Sciatic nerve (tissue), 2 donors: ENCODE measurements at regions of chr3 and their contacts with region 1.

Region 1: DNA sequence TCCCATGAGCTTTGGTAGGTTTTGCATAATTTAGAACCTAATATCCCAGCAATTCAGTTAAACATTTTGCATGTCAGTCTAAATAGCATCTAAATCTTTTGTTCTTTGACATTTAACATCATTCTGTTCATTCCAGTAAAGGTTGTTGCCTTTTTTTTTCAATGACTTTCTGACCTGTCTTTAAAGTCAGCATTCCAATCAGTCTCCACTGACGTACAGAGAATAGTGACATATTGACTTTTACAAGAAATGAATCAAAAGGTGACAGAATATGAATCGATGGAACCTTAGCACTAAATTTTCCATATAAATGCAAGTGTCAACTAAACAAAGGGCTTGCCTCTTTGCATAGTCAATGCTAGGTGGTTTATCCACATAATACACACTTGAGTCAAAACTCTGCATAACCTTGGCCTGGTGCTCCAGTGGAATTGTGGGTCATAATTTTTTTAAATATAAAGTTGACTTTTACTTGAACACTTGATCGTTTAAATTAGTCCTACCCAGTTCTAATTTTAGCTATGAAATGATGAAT is 370.2 kb downstream of the CNTN6 start:
- DNase-seq: no peak
- ATAC-seq: no peak

Region 2: DNA sequence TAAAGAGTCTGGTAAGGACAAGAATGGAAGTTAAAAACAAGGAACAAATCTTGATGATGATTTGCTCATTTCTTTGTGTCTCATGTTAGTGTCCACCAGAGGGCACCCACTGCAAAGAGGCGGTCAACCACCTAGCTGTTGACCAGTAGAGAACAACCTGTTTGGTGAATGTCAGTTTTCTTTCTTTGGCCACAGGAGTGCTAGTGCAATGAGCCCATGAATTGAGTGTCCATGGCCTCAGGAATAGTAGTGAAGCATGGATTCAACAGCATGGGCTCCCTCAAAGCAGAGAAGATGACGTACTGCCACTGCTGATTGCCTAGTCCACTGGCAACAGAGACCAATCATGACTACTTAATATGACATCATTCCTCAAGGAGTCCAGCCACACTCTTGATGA is 380.9 kb before region 1 on chr3:
- intact Hi-C with region 1: loop called (anchors 10 kb)
- DNase-seq: peak; percentile 65
- ATAC-seq: peak; percentile 61